ENCODE measurements at regions of chr1 and their contacts with region 1.

Region 1: GRCh38 chr1:154404984-154405761 is at the start of gene IL6R:
- DNase-seq: peak; percentile 90
- H3K4me3 Mint-ChIP-seq: peak within 1 kb of the TSS; percentile 86
- H3K27ac Mint-ChIP-seq: peak within 1 kb of the TSS; percentile 81
- H3K4me1 Mint-ChIP-seq: peaks cover 64% of the 10 kb centered on the region
- H3K27me3 Mint-ChIP-seq: peaks cover 2% of the 10 kb centered on the region
- total RNA-seq, gene IL6R: 3.0 and 3.3 TPM in 2 replicates

Region 2: DNA sequence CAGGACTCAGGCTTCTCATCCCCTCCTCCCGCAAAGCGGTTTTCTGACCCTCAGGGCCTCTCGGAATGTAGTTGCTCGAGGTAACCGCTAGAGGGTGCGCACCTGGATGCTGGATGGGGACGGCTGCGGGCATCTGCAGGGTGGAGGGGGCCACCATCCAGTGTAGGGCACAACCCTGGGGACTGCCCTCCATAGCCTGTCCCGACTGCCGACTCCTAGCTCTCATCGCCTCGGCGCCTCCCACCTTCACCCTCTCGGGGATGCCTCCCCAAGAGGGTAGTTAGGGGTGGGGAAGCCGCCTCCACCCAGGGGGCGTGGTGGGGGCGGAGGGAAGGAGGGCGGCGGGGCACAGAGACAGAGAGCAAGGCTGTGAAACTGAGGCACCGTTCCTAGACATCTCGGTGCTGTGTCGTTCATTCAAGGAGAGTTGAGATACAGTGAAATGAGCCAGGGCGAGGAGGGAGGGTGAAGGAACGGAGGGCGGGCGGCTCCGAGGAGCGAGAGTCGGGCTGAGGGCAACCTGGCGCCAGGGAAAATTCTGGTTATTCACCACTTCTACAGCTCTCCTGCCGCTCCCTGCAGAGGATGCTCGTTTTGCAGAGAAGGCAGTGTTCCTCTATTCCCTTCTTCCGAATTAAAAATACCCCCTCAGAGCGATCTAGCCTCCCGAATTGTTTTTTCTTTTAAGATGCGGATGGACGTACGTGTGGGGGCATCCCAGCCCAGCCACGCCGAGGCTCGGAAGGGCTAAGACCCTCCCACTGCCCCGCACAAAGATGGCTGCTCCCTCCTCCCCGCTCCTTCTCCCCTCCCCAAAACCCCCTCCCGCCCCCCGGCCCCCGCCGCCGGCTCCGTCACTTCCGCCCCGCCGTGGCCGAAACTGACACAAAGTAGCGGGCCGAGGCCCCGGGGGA is 80.2 kb before region 1 on chr1 and contains the start of gene ATP8B2:
- intact Hi-C with region 1: loop called (anchors 2 kb)
- DNase-seq: peak; percentile 95
- H3K4me3 Mint-ChIP-seq: peak within 1 kb of the TSS; percentile 98
- H3K27ac Mint-ChIP-seq: peak within 1 kb of the TSS; percentile 92
- H3K4me1 Mint-ChIP-seq: peaks cover 34% of the 10 kb centered on the region
- H3K27me3 Mint-ChIP-seq: peaks cover 21% of the 10 kb centered on the region
- total RNA-seq, gene ATP8B2: 49.4 and 49.6 TPM in 2 replicates

Region 3: GRCh38 chr1:154386643-154387352 is 18.4 kb before region 1 on chr1:
- intact Hi-C with region 1: loop called (anchors 2 kb)
- DNase-seq: peak; percentile 86
- H3K4me3 Mint-ChIP-seq: peak overlapping the region; percentile 78
- H3K27ac Mint-ChIP-seq: peak overlapping the region; percentile 94
- H3K4me1 Mint-ChIP-seq: peaks cover 18% of the 10 kb centered on the region
- H3K27me3 Mint-ChIP-seq: no peaks in the 10 kb centered on the region

Region 4: GRCh38 chr1:154442006-154442740 is 37.0 kb after region 1 on chr1:
- intact Hi-C with region 1: loop called (anchors 1 kb)
- DNase-seq: no peak
- H3K4me3 Mint-ChIP-seq: no peak overlapping the region
- H3K27ac Mint-ChIP-seq: no peak overlapping the region
- H3K4me1 Mint-ChIP-seq: peaks cover 53% of the 10 kb centered on the region
- H3K27me3 Mint-ChIP-seq: peaks cover 8% of the 10 kb centered on the region

Region 5: GRCh38 chr1:154479764-154480421 is 74.7 kb after region 1 on chr1:
- intact Hi-C with region 1: loop called (anchors 5 kb)
- DNase-seq: peak; percentile 92
- H3K4me3 Mint-ChIP-seq: no peak overlapping the region
- H3K27ac Mint-ChIP-seq: no peak overlapping the region
- H3K4me1 Mint-ChIP-seq: peaks cover 14% of the 10 kb centered on the region
- H3K27me3 Mint-ChIP-seq: peaks cover 11% of the 10 kb centered on the region

Measured in activated CD4-positive, alpha-beta T cell treated with anti-CD3 and anti-CD28 coated beads, Interleukin-2, amount 10 ng/mL, durations not matched to agents 24 days and 14 days (primary cell).